ENCODE measurements at regions of chr21 and their contacts with region 1.

Region 1: GRCh38 chr21:14382835-14383594 is at the start of gene HSPA13:
- DNase-seq: peak; percentile 99
- H3K4me3 Mint-ChIP-seq: peak within 1 kb of the TSS; percentile 98
- H3K27ac Mint-ChIP-seq: peak within 1 kb of the TSS; percentile 91
- H3K4me1 Mint-ChIP-seq: peaks cover 48% of the 10 kb centered on the region
- H3K27me3 Mint-ChIP-seq: no peaks in the 10 kb centered on the region
- total RNA-seq, gene HSPA13: 45.5 to 48.5 TPM

Region 2: DNA sequence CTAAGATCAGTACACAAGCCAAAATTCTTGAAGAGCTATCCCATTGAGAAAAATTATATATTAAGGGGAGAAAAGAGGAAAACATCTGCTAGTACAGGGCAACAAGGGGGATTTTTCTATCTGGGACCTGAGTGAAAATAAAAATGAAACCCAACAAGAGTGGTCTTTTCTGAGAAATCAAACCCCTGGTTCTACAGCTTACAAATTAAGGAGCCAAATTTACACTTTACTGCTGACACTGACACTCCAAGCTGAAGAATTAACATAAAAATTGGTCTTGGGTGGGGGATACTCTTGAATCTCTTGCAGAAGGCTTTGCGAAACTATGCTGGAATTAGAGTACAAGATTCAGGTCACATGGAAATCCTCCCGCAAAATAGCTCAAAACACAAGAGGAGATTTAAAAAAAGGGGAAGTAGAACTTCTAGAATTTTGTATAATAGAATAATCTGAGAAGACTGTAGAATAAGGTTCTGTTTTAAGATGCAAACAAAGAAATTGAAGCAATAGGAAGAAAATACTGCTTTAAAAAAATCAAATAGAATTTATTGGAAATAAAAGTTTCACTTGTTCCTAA is 32.0 kb after region 1 on chr21:
- CTCF ChIA-PET with region 1: no interaction called
- POLR2A ChIA-PET with region 1: no interaction called
- DNase-seq: no peak
- H3K4me3 Mint-ChIP-seq: no peak overlapping the region
- H3K27ac Mint-ChIP-seq: no peak overlapping the region
- H3K4me1 Mint-ChIP-seq: no peaks in the 10 kb centered on the region
- H3K27me3 Mint-ChIP-seq: peaks cover 4% of the 10 kb centered on the region

Region 3: GRCh38 chr21:14545906-14546480 is 163.0 kb after region 1 on chr21 and contains the start of gene SAMSN1:
- CTCF ChIA-PET with region 1: no interaction called
- POLR2A ChIA-PET with region 1: interaction called, 10 read pairs
- DNase-seq: peak; percentile 83
- H3K4me3 Mint-ChIP-seq: peak within 1 kb of the TSS; percentile 98
- H3K27ac Mint-ChIP-seq: peak within 1 kb of the TSS; percentile 87
- H3K4me1 Mint-ChIP-seq: peaks cover 62% of the 10 kb centered on the region
- H3K27me3 Mint-ChIP-seq: no peaks in the 10 kb centered on the region
- total RNA-seq, gene SAMSN1: 87.1 to 91.0 TPM

Measured in activated CD4-positive, alpha-beta memory T cell treated with anti-CD3 and anti-CD28 coated beads, Interleukin-2, amount 10 ng/mL, durations not matched to agents 7 days and 5 days (primary cell).